ENCODE measurements at regions of chr19 and their contacts with region 1.

Region 1: DNA sequence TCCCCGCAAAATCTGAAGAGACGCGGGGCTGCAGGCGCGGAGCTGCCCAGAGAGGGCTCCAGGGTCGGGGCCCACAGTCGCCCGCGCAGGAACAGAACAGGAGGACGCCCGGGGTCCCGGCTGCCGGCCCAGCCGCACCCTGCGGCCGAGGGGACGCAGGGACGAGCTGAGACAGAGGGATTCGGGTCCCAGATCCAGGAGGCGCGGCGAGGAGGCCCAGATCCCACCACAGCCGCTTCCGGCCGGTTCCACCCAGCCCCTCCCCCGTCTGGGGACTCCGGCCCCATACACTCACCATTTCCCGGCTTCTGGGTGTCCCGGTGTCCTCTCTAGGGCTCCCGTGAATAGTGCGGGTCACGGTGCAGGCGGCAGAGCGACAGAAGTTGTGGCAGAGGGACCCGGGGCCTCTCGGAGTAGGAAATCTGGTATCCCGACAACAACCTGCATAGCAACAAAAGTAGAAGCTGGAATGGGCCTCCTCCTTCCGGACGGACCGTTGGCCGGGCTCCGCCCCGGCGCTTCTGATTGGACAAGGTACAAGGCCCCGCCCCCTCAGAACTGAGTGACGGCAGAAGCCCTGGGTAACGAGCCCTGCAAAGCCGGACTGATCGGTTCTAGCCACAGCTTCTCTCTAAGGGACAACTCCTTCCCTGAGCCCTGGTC is at the start of gene ZNF20:
- DNase-seq: peak; percentile 85
- ATAC-seq: peak; percentile 96
- H3K4me3 Mint-ChIP-seq: peak within 1 kb of the TSS; percentile 97
- H3K27ac Mint-ChIP-seq: peak within 1 kb of the TSS; percentile 83
- H3K4me1 Mint-ChIP-seq: peaks cover 33% of the 10 kb centered on the region
- H3K27me3 Mint-ChIP-seq: no peaks in the 10 kb centered on the region
- CTCF ChIP-seq: no peak
- total RNA-seq, gene ZNF20: 4.2 and 8.5 TPM in 2 replicates

Region 2: DNA sequence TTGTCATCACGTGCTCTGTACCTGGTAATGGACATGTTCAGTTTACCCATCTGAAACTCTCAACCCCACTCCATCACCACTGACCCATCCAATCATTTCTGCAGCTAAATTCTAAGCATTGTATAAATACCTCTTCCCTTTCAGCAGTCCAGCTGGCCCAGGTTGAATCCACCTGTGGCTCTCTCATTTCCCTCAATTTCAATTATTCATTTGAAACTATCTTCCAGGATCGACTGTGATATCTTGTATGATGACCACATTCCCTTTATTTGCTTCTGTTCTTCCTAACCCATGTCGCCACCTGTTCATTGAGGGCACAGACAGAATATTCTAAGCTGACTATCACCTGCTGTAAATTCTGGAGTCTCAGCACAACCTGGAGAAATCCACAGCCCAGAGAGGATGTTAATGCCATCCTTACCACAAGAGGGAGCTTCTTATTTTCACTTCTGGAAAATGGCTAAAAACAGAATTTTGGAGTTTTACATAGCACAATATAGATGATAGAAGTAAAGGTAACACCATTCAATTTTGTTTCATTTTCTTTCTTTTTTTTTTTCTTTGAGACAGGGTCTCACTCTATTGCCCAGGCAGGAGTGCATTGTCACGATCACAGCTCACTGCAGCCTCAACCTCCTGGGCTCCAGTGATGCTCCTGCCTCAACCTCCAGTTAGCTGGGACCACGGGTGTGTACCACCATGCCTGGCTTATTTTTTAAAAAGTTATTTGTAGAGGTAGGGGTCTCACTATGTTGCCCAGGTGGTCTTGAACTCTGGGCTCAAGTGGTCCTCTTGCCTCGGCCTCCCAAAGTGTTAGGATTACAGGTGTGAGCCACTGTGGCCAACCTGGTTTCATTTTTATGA is 439.9 kb before region 1 on chr19:
- CTCF ChIA-PET with region 1: no interaction called
- POLR2A ChIA-PET with region 1: no interaction called
- intact Hi-C with region 1: loop called (anchors 1 kb)
- DNase-seq: no peak
- ATAC-seq: no peak
- H3K4me3 Mint-ChIP-seq: no peak overlapping the region
- H3K27ac Mint-ChIP-seq: no peak overlapping the region
- H3K4me1 Mint-ChIP-seq: peaks cover under 1% of the 10 kb centered on the region
- H3K27me3 Mint-ChIP-seq: peaks cover 7% of the 10 kb centered on the region
- CTCF ChIP-seq: no peak

Region 3: GRCh38 chr19:11814029-11814699 is 325.9 kb before region 1 on chr19 and contains the start of gene ZNF440:
- CTCF ChIA-PET with region 1: no interaction called
- POLR2A ChIA-PET with region 1: no interaction called
- intact Hi-C with region 1: loop called (anchors 5 kb)
- DNase-seq: peak; percentile 83
- ATAC-seq: peak; percentile 99
- H3K4me3 Mint-ChIP-seq: peak within 1 kb of the TSS; percentile 92
- H3K27ac Mint-ChIP-seq: peak within 1 kb of the TSS; percentile 84
- H3K4me1 Mint-ChIP-seq: peaks cover 28% of the 10 kb centered on the region
- H3K27me3 Mint-ChIP-seq: no peaks in the 10 kb centered on the region
- CTCF ChIP-seq: no peak
- total RNA-seq, gene ZNF440: 17.7 and 18.5 TPM in 2 replicates

Region 4: GRCh38 chr19:11964858-11965645 is 175.0 kb before region 1 on chr19 and contains the start of gene ZNF763:
- CTCF ChIA-PET with region 1: interaction called, 21 read pairs
- POLR2A ChIA-PET with region 1: interaction called, 25 read pairs
- intact Hi-C with region 1: loop called (anchors 1 kb)
- DNase-seq: peak; percentile 79
- ATAC-seq: peak; percentile 92
- H3K4me3 Mint-ChIP-seq: peak within 1 kb of the TSS; percentile 93
- H3K27ac Mint-ChIP-seq: peak within 1 kb of the TSS; percentile 97
- H3K4me1 Mint-ChIP-seq: peaks cover 26% of the 10 kb centered on the region
- H3K27me3 Mint-ChIP-seq: no peaks in the 10 kb centered on the region
- CTCF ChIP-seq: no peak
- total RNA-seq, gene ZNF763: 9.8 and 10.0 TPM in 2 replicates

Region 5: GRCh38 chr19:12092065-12092867 is 47.8 kb before region 1 on chr19:
- CTCF ChIA-PET with region 1: interaction called, 6 read pairs
- POLR2A ChIA-PET with region 1: interaction called, 6 read pairs
- intact Hi-C with region 1: loop called (anchors 1 kb)
- DNase-seq: peak; percentile 43
- ATAC-seq: peak; percentile 70
- H3K4me3 Mint-ChIP-seq: peak overlapping the region; percentile 83
- H3K27ac Mint-ChIP-seq: no peak overlapping the region
- H3K4me1 Mint-ChIP-seq: peaks cover 17% of the 10 kb centered on the region
- H3K27me3 Mint-ChIP-seq: peaks cover 3% of the 10 kb centered on the region
- CTCF ChIP-seq: no peak

Region 6: GRCh38 chr19:12346896-12347295 is 206.9 kb after region 1 on chr19:
- CTCF ChIA-PET with region 1: interaction called, 4 read pairs
- POLR2A ChIA-PET with region 1: no interaction called
- intact Hi-C with region 1: loop called (anchors 2 kb)
- DNase-seq: no peak
- ATAC-seq: peak; percentile 61
- H3K4me3 Mint-ChIP-seq: no peak overlapping the region
- H3K27ac Mint-ChIP-seq: no peak overlapping the region
- H3K4me1 Mint-ChIP-seq: no peaks in the 10 kb centered on the region
- H3K27me3 Mint-ChIP-seq: no peaks in the 10 kb centered on the region
- CTCF ChIP-seq: no peak

Measured in activated B cell treated with CpG ODN at 0.5 μM for 24 hours (primary cell).